ENCODE measurements at regions of chr11 and their contacts with region 1.

Region 1: DNA sequence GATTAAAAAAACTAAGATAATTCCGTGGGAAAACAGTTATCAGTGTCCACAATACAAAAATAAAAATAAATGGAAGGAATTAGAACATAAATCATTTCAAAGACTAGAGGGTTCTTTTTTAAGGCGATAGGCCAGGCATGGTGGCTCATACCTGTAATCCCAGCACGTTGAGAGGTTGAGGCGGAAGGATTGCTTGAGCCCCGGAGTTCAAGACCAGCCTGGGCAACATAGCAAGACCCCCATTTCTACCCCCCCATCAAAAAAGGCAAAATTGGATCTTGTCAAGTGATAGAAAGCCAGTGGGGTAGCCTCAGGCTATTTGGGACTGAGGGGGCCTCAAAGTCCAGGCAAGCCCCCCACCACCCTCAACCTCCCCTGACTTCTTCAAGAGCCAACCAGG is 20.6 kb upstream of the POLA2 start:
- DNase-seq: no peak
- H3K4me3 ChIP-seq: no peak overlapping the region
- H3K27ac ChIP-seq: no peak overlapping the region
- H3K27me3 ChIP-seq: peaks cover 6% of the 10 kb centered on the region
- CTCF ChIP-seq: no peak

Region 2: GRCh38 chr11:65354265-65355012 is 113.3 kb after region 1 on chr11 and contains the start of gene TIGD3:
- CTCF ChIA-PET with region 1: no interaction called
- POLR2A ChIA-PET with region 1: interaction called, 12 read pairs
- DNase-seq: peak; percentile 73
- H3K4me3 ChIP-seq: peak within 1 kb of the TSS; percentile 70
- H3K27ac ChIP-seq: peak within 1 kb of the TSS; percentile 65
- H3K27me3 ChIP-seq: peaks cover 24% of the 10 kb centered on the region
- CTCF ChIP-seq: no peak
- polyA plus RNA-seq, gene TIGD3: 0.07 and 0.11 TPM in 2 replicates